ENCODE measurements at regions of chr9 and their contacts with region 1.

Region 1: DNA sequence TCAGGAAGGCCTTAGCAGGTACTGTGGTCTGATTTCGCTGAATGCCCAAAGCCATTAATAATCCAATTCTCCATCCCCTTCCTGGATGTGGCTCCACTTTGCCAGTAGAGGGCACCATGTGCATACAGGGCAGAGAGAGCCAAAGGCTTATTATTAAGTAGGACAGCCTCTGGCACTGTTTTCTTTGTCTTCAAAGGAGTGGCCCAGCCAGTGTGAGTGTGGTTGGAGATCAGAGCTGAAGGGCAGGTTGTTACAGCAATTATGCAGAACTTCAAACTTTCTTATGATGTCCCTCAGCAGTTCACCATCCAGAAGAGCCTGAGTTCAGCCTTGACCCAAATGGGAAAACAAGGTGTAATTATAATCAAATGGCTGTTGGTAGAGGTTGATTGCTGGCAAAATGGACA is 38.6 kb upstream of the CEMIP2 start:
- DNase-seq: no peak
- ATAC-seq: peak; percentile 100
- H3K4me3 ChIP-seq: no peak overlapping the region
- H3K27ac ChIP-seq: no peak overlapping the region
- H3K4me1 ChIP-seq: no peaks in the 10 kb centered on the region
- H3K27me3 ChIP-seq: no peaks in the 10 kb centered on the region
- CTCF ChIP-seq: peak; percentile 85 to 94 (median 91)
- EP300 ChIP-seq: no peak
- POLR2A ChIP-seq: no peak
- RAD21 ChIP-seq: peak; percentile 94

Region 2: GRCh38 chr9:71783120-71783530 is 23.8 kb before region 1 on chr9:
- CTCF ChIA-PET with region 1: interaction called, 9 read pairs
- POLR2A ChIA-PET with region 1: no interaction called
- RAD21 ChIA-PET with region 1: interaction called, 3 read pairs
- SMC1A ChIA-PET with region 1: interaction called, 31 read pairs
- in situ Hi-C with region 1: no loop called
- intact Hi-C with region 1: no loop called
- DNase-seq: no peak
- ATAC-seq: peak; percentile 89
- H3K4me3 ChIP-seq: no peak overlapping the region; the same call in 1 of the 2 replicates
- H3K27ac ChIP-seq: no peak overlapping the region
- H3K4me1 ChIP-seq: peaks cover 23% of the 10 kb centered on the region
- H3K27me3 ChIP-seq: no peaks in the 10 kb centered on the region
- CTCF ChIP-seq: peak in 2 of 3 experiments; percentile 35 to 37; a peak in 3 of 6 replicates
- EP300 ChIP-seq: peak; percentile 79 to 95; a peak in 3 of 4 replicates
- POLR2A ChIP-seq: 0 out of 2 replicates have a peak, but pooled peaks have one; percentile 24
- RAD21 ChIP-seq: peak; percentile 49

Region 3: DNA sequence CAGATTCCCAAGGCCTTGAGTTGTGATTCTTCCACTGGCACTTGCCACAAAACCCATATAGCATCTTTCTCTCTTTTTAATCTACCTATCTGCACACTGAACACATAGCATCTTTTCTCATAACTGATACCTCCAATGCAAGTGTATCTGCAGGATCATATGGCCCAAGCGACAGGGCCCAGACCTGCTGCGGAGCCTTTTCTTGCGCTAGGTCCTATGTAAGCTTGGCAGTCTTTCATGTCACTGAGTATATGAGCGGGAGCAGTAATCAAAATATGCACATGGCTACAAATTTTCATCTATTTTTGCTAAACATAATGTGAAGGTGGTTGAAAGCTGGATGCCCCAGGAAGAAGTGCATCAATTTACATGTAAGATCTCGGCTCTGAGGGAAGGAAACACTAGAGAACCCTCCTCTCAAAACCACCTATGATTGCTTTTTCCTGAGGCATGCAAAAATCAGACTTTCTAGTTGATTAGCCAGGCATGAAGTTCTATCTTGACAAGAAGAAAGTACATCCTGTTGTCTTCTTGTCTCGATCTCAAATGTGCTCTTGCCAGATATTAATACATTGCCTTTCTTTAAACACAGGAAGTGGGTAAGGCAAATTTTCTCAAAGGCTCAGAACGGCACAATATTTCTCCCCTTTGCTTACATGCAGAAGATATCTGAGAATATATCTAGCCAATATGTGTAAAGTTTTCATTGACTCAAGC is 11.6 kb before region 1 on chr9:
- CTCF ChIA-PET with region 1: interaction called, 46 read pairs
- POLR2A ChIA-PET with region 1: no interaction called
- RAD21 ChIA-PET with region 1: no interaction called
- SMC1A ChIA-PET with region 1: interaction called, 7 read pairs
- in situ Hi-C with region 1: no loop called
- intact Hi-C with region 1: no loop called
- DNase-seq: peak; percentile 91
- ATAC-seq: peak; percentile 89
- H3K4me3 ChIP-seq: no peak overlapping the region
- H3K27ac ChIP-seq: no peak overlapping the region
- H3K4me1 ChIP-seq: peaks cover 32% of the 10 kb centered on the region
- H3K27me3 ChIP-seq: no peaks in the 10 kb centered on the region
- CTCF ChIP-seq: no peak
- EP300 ChIP-seq: peak in 1 of 2 experiments; percentile 31; a peak in 1 of 4 replicates
- POLR2A ChIP-seq: no peak
- RAD21 ChIP-seq: no peak

Region 4: DNA sequence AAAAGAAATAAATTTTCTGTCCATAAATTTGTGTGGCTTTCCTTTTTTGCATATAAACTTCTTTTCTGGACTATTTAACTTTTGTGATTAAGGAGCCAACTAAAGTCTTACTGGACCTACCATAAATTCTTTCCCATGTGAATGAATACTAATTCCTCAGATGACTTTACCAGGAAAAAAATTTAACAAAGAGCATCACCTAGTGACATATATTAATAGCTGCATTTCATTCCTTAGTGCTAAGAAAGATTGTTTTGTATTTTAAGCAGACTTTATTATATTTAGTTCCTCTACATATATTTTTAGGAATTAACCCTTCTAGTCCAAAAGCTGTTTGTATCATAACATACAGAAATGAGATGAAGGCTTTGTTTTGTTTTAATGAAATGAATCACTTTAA is 168.9 kb after region 1 on chr9:
- CTCF ChIA-PET with region 1: interaction called, 9 read pairs
- POLR2A ChIA-PET with region 1: no interaction called
- RAD21 ChIA-PET with region 1: no interaction called
- SMC1A ChIA-PET with region 1: interaction called, 7 read pairs
- in situ Hi-C with region 1: no loop called
- intact Hi-C with region 1: loop called (anchors 5 kb)
- DNase-seq: no peak
- ATAC-seq: no peak
- H3K4me3 ChIP-seq: no peak overlapping the region
- H3K27ac ChIP-seq: no peak overlapping the region
- H3K4me1 ChIP-seq: no peaks in the 10 kb centered on the region
- H3K27me3 ChIP-seq: no peaks in the 10 kb centered on the region
- CTCF ChIP-seq: peak in 1 of 3 experiments; percentile 44; a peak in 2 of 6 replicates
- EP300 ChIP-seq: no peak
- POLR2A ChIP-seq: no peak
- RAD21 ChIP-seq: peak; percentile 30; the same call in 1 of the 2 replicates

Region 5: DNA sequence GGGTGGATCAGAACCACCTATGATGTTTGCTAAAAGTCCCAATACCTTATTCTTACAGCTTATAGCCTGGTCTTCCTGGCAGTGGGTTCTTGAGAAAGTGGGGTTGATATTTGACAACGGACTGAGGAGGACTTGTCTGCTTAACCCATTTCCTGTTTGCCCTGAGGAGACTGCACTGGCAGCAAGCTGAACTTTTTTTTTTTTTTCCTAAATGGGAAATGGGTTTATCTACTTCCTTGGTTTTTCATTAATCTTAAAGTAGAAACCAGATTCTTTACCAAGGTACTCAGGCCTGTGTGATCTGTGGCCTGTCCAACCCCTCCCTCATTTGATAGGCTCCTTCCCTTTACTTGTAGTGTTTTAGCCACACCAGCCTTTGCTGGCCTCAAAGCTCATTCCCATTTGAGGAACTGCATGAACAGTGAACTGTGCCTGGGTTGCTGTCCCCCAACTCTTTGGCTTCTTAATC is 206.4 kb after region 1 on chr9:
- CTCF ChIA-PET with region 1: interaction called, 10 read pairs
- POLR2A ChIA-PET with region 1: no interaction called
- RAD21 ChIA-PET with region 1: no interaction called
- SMC1A ChIA-PET with region 1: interaction called, 3 read pairs
- in situ Hi-C with region 1: no loop called
- intact Hi-C with region 1: no loop called
- DNase-seq: no peak
- ATAC-seq: no peak
- H3K4me3 ChIP-seq: no peak overlapping the region
- H3K27ac ChIP-seq: no peak overlapping the region
- H3K4me1 ChIP-seq: no peaks in the 10 kb centered on the region
- H3K27me3 ChIP-seq: no peaks in the 10 kb centered on the region; a peak in 1 of 4 replicates
- CTCF ChIP-seq: no peak
- EP300 ChIP-seq: no peak
- POLR2A ChIP-seq: no peak
- RAD21 ChIP-seq: no peak

Region 6: DNA sequence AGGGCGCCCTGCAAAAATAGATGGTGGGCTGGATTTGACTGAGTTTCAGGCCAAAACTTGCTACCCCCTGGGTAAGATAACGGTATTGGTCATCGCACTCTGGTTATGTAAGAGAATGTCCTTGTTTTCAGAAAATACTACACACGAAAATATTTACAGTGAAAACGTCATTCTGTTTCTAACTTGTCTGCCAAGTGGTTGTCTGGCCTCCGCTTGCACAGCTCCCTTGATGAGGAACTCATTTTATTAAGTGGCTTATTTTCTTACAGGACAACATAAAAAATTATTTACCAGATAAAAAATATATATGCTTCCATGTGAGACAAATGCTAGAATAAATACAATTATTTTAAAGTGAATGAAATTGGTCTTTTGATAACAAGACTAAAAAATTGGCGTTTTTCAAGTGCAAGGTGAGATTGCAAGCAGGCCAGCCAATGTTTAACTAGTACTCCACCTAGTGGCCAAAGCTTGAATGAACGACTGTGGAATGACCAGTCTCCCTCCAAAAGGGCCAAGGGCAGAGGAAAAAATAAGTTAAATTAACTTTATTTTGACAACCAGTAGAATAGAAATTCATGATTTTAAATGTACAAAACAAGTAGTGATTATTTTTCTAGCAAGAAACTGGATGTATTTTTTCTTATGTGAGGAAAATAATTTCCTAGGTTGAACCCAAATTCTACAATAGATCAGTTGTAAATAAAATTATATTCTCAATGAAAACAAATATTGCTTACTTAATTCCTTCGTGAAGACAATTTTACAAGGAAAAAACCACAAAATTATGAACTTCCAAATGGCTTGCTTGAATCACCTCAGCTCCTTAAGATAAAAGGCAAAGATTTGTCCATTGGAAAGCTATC is 464.9 kb after region 1 on chr9:
- CTCF ChIA-PET with region 1: interaction called, 6 read pairs
- POLR2A ChIA-PET with region 1: no interaction called
- RAD21 ChIA-PET with region 1: interaction called, 4 read pairs
- SMC1A ChIA-PET with region 1: interaction called, 3 read pairs
- in situ Hi-C with region 1: loop called (anchors 10 kb)
- intact Hi-C with region 1: loop called (anchors 10 kb)
- DNase-seq: no peak
- ATAC-seq: peak; percentile 78
- H3K4me3 ChIP-seq: no peak overlapping the region
- H3K27ac ChIP-seq: no peak overlapping the region
- H3K4me1 ChIP-seq: peaks cover 3% of the 10 kb centered on the region; the same call in 1 of the 2 replicates
- H3K27me3 ChIP-seq: peaks cover 0 to 2% of the 10 kb centered on the region in 2 experiments; a peak in 1 of 4 replicates
- CTCF ChIP-seq: peak; percentile 80 to 82 (median 81)
- EP300 ChIP-seq: no peak
- POLR2A ChIP-seq: no peak
- RAD21 ChIP-seq: peak; percentile 83